ENCODE measurements at regions of chr11 and their contacts with region 1.

Region 1: GRCh38 chr11:117287668-117288067 is 3.5 kb upstream of the BACE1-AS start:
- DNase-seq: no peak
- ATAC-seq: no peak
- H3K4me3 ChIP-seq: no peak overlapping the region
- H3K4me3 Mint-ChIP-seq: no peak overlapping the region
- H3K27ac ChIP-seq: no peak overlapping the region
- H3K27ac Mint-ChIP-seq: no peak overlapping the region
- H3K4me1 ChIP-seq: peaks cover 10% of the 10 kb centered on the region
- H3K4me1 Mint-ChIP-seq: no peaks in the 10 kb centered on the region
- H3K27me3 ChIP-seq: no peaks in the 10 kb centered on the region
- H3K27me3 Mint-ChIP-seq: no peaks in the 10 kb centered on the region
- CTCF ChIP-seq: no peak

Region 2: DNA sequence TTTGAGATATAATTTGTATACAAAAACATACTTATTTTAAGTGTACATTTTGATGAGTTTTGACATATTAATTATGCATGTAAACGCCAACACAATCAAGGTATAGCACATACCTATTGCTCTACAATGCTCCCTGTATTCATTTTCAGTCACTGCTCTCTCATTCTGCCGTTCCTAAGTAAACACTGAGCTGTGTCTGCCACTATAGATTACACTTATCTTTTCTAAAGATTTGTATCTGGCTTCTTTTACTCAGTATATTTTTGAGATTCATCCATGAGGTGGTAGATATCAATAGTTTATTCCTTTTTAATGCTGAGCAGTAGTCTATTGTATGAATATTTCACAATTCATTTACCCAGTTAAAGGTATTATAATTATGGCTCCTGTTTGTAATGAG is 21.9 kb before region 1 on chr11:
- CTCF ChIA-PET with region 1: no interaction called
- POLR2A ChIA-PET with region 1: no interaction called
- intact Hi-C with region 1: loop called in 1 of 2 experiments (anchors 1 kb)
- DNase-seq: no peak
- ATAC-seq: no peak
- H3K4me3 ChIP-seq: no peak overlapping the region
- H3K4me3 Mint-ChIP-seq: no peak overlapping the region
- H3K27ac ChIP-seq: no peak overlapping the region
- H3K27ac Mint-ChIP-seq: no peak overlapping the region
- H3K4me1 ChIP-seq: no peaks in the 10 kb centered on the region
- H3K4me1 Mint-ChIP-seq: no peaks in the 10 kb centered on the region
- H3K27me3 ChIP-seq: no peaks in the 10 kb centered on the region
- H3K27me3 Mint-ChIP-seq: no peaks in the 10 kb centered on the region
- CTCF ChIP-seq: no peak

Region 3: GRCh38 chr11:117327567-117328374 is 40.1 kb after region 1 on chr11 and contains the start of gene CEP164:
- CTCF ChIA-PET with region 1: no interaction called
- POLR2A ChIA-PET with region 1: no interaction called
- intact Hi-C with region 1: no loop called
- DNase-seq: peak; percentile 89 to 97 (median 92)
- ATAC-seq: peak; percentile 93
- H3K4me3 ChIP-seq: peak within 1 kb of the TSS; percentile 92
- H3K4me3 Mint-ChIP-seq: peak within 1 kb of the TSS; percentile 69
- H3K27ac ChIP-seq: peak within 1 kb of the TSS; percentile 68 to 92
- H3K27ac Mint-ChIP-seq: peak within 1 kb of the TSS; percentile 59
- H3K4me1 ChIP-seq: peaks cover 23% of the 10 kb centered on the region
- H3K4me1 Mint-ChIP-seq: peaks cover 9% of the 10 kb centered on the region
- H3K27me3 ChIP-seq: no peaks in the 10 kb centered on the region
- H3K27me3 Mint-ChIP-seq: no peaks in the 10 kb centered on the region
- CTCF ChIP-seq: no peak
- total RNA-seq, gene CEP164: 33.0 to 36.7 TPM

Region 4: DNA sequence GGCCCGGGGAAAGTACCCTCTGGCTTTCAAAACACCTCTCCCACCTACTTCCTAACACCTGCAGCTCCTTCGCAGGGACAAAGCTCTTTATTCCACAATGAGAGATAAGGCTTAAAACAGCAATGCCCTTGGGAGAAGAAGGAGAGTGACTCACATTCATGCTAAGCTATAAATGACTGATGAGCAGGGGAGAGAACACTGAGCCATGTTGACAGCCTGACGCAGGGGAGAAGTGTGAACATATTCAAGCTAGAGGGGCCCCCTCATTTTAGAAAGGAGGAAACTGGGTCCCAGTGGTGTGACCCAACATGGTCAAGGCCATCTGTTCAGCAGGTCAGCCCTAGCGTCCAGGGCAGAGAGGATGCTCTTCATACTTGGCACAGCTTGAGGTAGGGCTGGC is 337.6 kb after region 1 on chr11:
- CTCF ChIA-PET with region 1: no interaction called
- POLR2A ChIA-PET with region 1: no interaction called
- intact Hi-C with region 1: no loop called
- DNase-seq: no peak
- ATAC-seq: no peak
- H3K4me3 ChIP-seq: no peak overlapping the region
- H3K4me3 Mint-ChIP-seq: no peak overlapping the region
- H3K27ac ChIP-seq: no peak overlapping the region
- H3K27ac Mint-ChIP-seq: no peak overlapping the region
- H3K4me1 ChIP-seq: no peaks in the 10 kb centered on the region
- H3K4me1 Mint-ChIP-seq: no peaks in the 10 kb centered on the region
- H3K27me3 ChIP-seq: peaks cover 0 to 2% of the 10 kb centered on the region in 2 experiments
- H3K27me3 Mint-ChIP-seq: peaks cover 14% of the 10 kb centered on the region
- CTCF ChIP-seq: no peak

Measured in CD4-positive, alpha-beta T cell (primary cell).